Endothelial cell of umbilical vein (primary cell): ENCODE measurements at regions of chr7 and their contacts with region 1.

Region 1: DNA sequence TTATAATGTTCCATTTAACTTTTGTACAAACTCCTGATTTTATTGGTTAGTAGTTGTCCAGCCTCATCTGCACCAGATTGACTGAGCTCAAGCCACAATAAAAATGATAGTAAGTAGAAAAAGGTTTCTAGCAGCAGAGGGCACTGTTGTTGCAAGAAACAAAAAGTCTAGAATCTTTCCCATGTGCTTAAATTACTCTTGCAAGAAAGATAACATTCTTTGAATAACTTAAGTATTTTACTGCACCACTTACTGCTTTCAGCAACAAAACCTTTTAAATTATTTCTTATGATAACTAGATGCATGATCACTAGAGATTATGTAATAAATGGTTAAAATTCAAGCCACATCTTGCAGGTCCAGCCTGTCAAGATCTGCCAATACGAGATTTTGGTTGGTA is 27.0 kb downstream of the LMOD2 start:
- DNase-seq: peak; percentile 72
- H3K4me3 ChIP-seq: no peak overlapping the region
- H3K27ac ChIP-seq: no peak overlapping the region
- H3K4me1 ChIP-seq: no peaks in the 10 kb centered on the region
- H3K27me3 ChIP-seq: no peaks in the 10 kb centered on the region
- CTCF ChIP-seq: peak; percentile 25 to 41
- POLR2A ChIP-seq: no peak

Region 2: DNA sequence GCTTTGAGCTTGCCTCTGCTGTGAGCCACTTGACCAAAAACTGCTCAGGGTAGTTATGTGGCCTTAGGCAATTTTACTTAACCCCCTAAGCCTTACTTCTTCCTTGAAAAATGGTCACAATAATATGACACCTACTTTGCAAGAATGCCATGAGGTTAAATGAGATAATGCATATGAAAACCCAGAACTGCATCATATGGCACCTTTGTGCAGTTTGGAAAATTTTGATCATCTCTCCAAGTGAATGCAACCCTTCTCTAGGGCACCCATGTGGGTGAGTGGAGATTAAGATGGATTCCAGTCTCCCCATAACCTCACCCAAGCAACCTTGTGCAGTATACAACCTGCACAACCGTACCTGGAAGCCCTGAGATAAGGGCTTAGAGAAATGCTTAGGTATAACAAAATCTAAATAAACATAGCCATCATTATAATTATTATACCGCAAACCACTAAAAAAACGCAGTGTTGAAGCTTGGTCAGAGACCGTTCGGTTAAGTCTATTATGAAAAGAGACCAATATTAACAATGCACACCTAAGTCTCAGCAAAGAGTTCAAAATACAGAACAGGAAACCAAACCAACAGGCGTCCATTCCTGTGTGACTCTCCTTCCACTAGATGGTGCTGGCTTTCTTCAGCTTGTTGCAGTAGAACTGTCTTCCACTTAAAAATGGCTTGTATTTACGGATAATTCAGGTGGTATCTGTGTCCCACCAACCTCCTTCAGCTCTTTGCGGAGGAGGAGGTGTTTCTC is 102.1 kb before region 1 on chr7:
- CTCF ChIA-PET with region 1: interaction called, 6 read pairs
- POLR2A ChIA-PET with region 1: no interaction called
- dilution Hi-C with region 1: no loop called
- intact Hi-C with region 1: loop called (anchors 5 kb)
- DNase-seq: peak; percentile 61
- H3K4me3 ChIP-seq: no peak overlapping the region
- H3K27ac ChIP-seq: no peak overlapping the region
- H3K4me1 ChIP-seq: no peaks in the 10 kb centered on the region
- H3K27me3 ChIP-seq: no peaks in the 10 kb centered on the region
- CTCF ChIP-seq: peak; percentile 69 to 73
- POLR2A ChIP-seq: no peak

Region 3: DNA sequence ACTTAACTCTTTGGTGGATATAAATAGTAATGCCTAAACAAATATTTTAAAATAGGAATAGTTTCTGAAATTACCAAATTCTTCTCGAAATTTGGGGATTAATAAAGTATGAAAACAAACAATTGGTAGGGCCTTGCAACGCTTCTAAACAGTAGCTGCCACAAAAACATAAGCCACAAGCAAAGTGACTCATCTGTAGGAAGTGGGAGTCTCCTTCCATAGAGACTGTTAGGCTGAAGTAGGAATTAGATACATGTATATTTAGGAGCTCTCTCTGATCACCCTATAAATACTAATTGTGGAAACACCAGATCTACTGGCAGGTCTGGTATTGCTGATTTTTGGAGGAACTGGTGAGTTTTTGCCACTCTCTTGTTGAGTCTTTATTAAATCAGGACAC is 32.7 kb before region 1 on chr7:
- CTCF ChIA-PET with region 1: interaction called, 21 read pairs
- POLR2A ChIA-PET with region 1: no interaction called
- dilution Hi-C with region 1: no loop called
- intact Hi-C with region 1: no loop called
- DNase-seq: peak; percentile 46
- H3K4me3 ChIP-seq: no peak overlapping the region
- H3K27ac ChIP-seq: no peak overlapping the region
- H3K4me1 ChIP-seq: peaks cover 11% of the 10 kb centered on the region
- H3K27me3 ChIP-seq: no peaks in the 10 kb centered on the region
- CTCF ChIP-seq: no peak
- POLR2A ChIP-seq: no peak

Region 4: GRCh38 chr7:123705211-123705901 is 22.7 kb after region 1 on chr7:
- CTCF ChIA-PET with region 1: interaction called, 16 read pairs
- POLR2A ChIA-PET with region 1: no interaction called
- dilution Hi-C with region 1: no loop called
- intact Hi-C with region 1: no loop called
- DNase-seq: no peak
- H3K4me3 ChIP-seq: no peak overlapping the region
- H3K27ac ChIP-seq: no peak overlapping the region
- H3K4me1 ChIP-seq: no peaks in the 10 kb centered on the region
- H3K27me3 ChIP-seq: no peaks in the 10 kb centered on the region
- CTCF ChIP-seq: no peak
- POLR2A ChIP-seq: no peak

Region 5: DNA sequence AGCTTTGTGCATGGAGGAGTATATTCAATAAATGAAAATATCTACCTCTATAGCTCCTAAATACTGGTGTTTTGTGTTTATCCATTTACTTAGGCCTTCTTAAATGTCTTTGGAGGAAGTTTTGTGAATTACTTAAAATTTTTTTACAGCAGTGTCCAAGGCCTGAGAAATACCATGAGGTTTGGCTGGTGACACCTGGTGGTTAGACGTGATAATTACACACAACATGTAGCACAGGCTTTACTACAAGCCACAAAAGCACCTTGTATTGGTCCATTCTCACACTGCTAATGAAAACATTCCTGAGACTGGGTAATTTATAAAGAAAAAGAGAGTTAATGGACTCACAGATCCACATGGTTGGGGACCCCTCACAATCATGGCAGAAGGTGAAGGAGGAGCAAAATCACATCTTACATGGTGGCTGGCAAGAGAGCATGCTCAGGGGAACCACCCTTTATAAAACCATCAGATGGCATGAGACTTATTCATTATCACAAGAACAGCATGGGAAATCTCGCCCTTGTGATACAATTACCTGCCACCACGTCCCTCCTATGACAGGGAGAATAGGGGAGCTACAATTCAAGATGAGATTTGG is 182.9 kb after region 1 on chr7:
- CTCF ChIA-PET with region 1: interaction called, 50 read pairs
- POLR2A ChIA-PET with region 1: no interaction called
- dilution Hi-C with region 1: no loop called
- intact Hi-C with region 1: loop called (anchors 1 kb)
- DNase-seq: peak; percentile 84
- H3K4me3 ChIP-seq: no peak overlapping the region
- H3K27ac ChIP-seq: peak overlapping the region; percentile 34
- H3K4me1 ChIP-seq: peaks cover 9% of the 10 kb centered on the region
- H3K27me3 ChIP-seq: no peaks in the 10 kb centered on the region
- CTCF ChIP-seq: peak; percentile 41 to 56
- POLR2A ChIP-seq: no peak

Region 6: DNA sequence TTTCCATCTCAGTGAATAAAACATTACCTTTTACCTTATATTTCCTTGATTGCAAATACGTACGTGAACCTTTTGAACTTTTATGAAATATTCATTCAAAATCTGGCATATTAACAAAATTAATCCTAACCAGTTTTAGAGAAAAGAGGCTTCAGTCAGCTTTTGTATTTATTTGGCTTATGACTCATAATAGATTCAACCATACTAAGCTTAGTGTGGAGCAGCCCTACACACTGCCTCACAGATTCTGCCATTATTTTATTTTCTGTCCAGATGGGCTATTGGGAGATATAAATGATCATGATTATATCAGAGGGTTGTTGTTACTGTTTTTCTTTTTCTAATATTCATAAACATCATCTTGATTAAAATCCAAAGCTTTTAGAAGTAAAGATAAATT is 757.4 kb after region 1 on chr7:
- CTCF ChIA-PET with region 1: no interaction called
- POLR2A ChIA-PET with region 1: no interaction called
- dilution Hi-C with region 1: no loop called
- intact Hi-C with region 1: no loop called
- DNase-seq: no peak
- H3K4me3 ChIP-seq: no peak overlapping the region
- H3K27ac ChIP-seq: no peak overlapping the region
- H3K4me1 ChIP-seq: no peaks in the 10 kb centered on the region
- H3K27me3 ChIP-seq: no peaks in the 10 kb centered on the region
- CTCF ChIP-seq: no peak
- POLR2A ChIP-seq: no peak